ENCODE measurements at regions of chr17 and their contacts with region 1.

Region 1: GRCh38 chr17:7394452-7395191 is at the start of gene PLSCR3:
- DNase-seq: peak; percentile 94
- ATAC-seq: peak; percentile 94
- total RNA-seq, gene PLSCR3: 18.4 TPM

Region 2: DNA sequence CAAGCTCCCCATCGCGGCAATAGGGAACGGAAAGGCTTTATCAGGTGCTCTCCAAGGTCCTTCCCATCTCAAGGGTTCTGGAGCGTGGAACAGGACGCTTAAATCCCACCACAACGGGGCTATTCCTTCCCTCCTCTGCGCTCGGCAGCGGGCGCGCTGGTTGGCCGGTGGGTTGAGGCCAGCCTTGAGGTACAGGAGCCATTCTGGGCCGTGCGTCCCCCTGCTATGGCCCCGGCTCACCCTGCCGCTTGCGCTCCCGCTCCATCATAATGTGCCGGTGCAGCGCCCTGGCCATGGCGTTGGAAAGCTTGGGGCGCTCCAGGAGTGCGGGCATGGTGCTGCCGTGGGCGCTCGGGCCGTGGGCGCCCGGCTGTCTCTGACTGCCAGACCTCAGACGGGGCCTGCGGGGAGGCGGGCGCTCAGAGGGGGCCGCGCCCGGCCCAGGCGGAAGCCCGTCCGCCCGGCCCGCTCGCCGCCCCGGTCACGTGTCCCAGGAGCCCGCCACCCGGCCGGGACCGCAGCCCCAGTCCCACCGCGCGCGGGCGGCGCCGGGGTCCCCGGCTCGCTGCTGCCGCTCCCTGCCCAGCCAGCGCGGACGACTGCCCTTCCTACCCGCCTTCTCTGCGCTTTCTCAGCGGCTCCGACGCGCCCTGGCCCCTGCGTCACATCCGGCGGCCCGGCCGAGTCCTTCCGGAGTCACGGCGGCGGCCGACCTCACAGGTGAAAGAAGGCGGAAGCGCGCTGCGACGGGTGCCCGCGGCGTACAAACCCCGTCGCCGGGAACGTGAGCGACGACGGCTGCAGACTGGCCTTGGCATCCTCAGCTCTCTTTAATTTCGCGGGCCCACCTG is 79.7 kb before region 1 on chr17 and contains the start of gene GPS2:
- intact Hi-C with region 1: loop called (anchors 5 kb)
- DNase-seq: peak; percentile 98
- ATAC-seq: peak; percentile 86
- total RNA-seq, gene GPS2: 70.3 TPM

Region 3: GRCh38 chr17:7572588-7573323 is 178.1 kb after region 1 on chr17:
- intact Hi-C with region 1: loop called (anchors 5 kb)
- DNase-seq: peak; percentile 99
- ATAC-seq: peak; percentile 96

Measured in Right ventricle myocardium inferior (tissue), 1 donor.